K562 (cell line): ENCODE measurements at regions of chr12 and their contacts with region 1.

Region 1: DNA sequence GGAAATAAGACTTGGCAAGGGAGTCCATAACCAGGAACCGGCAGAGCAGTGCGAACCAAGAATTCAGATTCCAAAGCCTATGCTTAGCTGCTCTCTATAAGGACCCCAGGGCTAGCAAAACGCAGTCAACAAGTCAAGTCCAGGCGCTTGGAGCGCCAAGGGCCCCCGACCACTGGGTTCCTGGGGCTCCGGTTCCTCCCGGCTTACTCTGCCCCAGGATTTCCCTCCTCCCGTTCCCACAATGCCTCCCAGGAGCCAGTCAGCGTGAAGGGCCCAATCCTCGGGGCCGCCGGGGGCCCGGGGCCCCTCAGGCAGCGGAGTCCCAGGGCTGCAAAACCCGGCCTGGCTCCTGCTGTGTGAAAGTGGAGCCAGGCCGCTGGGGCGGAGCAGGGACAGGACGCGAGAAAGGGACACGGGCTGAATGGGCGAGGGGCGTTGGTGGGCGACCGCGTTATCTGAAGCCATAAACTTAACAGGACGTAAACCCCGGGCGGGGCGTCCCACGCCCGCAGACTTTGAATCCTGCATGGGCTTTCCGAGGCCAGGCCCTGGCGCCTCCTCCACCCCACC is 1.5 kb downstream of the KRT8 start:
- DNase-seq: peak; percentile 88 to 95 (median 91)
- ATAC-seq: peak; percentile 89
- H3K4me3 ChIP-seq: peak overlapping the region; percentile 58
- H3K27ac ChIP-seq: peak overlapping the region; percentile 83
- H3K4me1 ChIP-seq: peaks cover 43 to 53% of the 10 kb centered on the region in 2 experiments
- H3K27me3 ChIP-seq: no peaks in the 10 kb centered on the region
- CTCF ChIP-seq: no peak
- EP300 ChIP-seq: peak; percentile 30; the same call in 1 of the 2 replicates
- POLR2A ChIP-seq: no peak
- RAD21 ChIP-seq: 0 out of 4 replicates have a peak, but pooled peaks of 1 of the 2 experiments have one; percentile 16

Region 2: DNA sequence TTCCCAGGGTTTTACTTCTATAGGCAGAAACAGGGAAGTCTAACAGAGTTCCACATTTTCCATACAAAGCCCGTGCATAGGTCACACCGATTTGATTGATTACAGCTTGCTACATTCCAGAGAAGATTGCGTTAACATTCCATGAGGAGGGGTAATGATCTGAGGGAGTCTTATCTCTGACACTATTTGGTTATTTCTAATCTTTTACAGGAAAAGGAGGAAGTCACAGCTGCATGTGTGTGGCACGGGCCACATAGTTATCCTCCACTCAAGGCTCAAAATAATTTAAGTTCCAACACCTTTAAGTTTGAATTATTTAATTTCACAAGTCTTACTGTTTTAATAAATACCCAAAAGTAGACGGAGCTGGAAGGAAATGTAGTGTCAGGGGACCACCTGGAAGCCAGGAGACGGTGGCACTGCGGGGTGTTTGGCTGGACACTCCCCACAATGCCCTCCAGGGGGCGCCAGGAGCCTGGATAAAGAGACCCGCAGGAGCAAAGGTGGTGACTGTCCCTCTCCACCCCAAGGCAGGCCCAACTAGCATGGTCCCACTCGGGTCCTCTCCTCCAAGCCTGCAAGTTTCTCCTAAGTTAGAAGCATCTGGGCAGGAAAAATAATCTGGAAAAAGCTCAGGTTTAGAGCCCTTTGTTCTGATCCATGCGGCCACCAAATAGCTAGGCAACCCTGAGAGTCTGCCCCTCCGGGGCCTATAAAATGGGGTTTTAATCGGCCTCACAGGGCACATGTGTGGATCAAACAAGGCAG is 18.7 kb before region 1 on chr12:
- CTCF ChIA-PET with region 1: interaction called, 7 read pairs
- POLR2A ChIA-PET with region 1: interaction called, 6 read pairs
- in situ Hi-C with region 1: no loop called
- intact Hi-C with region 1: loop called (anchors 1 kb)
- DNase-seq: peak; percentile 83 to 90 (median 88)
- ATAC-seq: peak; percentile 94
- H3K4me3 ChIP-seq: no peak overlapping the region
- H3K27ac ChIP-seq: no peak overlapping the region
- H3K4me1 ChIP-seq: peaks cover 0 to 6% of the 10 kb centered on the region in 2 experiments; a peak in 3 of 5 replicates
- H3K27me3 ChIP-seq: no peaks in the 10 kb centered on the region
- CTCF ChIP-seq: peak; percentile 95 to 97 (median 97)
- EP300 ChIP-seq: no peak
- POLR2A ChIP-seq: no peak
- RAD21 ChIP-seq: peak; percentile 99 to 100

Region 3: DNA sequence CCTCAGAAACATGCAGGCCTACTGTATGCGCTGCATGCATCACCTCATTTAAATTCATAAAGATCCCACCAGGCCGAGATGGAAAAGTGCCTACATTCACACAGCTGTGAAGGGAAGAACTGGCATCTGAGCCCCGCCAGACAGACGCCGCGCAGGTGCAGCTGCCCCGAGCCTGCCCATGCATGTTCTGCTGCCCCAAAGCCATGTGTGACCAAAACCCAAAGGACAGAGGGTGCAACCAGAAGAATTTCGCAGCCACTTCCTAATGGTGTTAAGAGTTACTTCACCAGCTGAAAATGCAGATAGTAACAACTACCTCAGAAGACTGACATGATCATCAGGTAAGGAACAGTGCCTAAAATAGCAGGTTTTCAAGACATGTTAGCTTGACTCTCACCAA is 15.0 kb after region 1 on chr12:
- CTCF ChIA-PET with region 1: no interaction called
- POLR2A ChIA-PET with region 1: interaction called, 18 read pairs
- in situ Hi-C with region 1: no loop called
- intact Hi-C with region 1: no loop called
- DNase-seq: peak in 1 of 4 experiments; percentile 3
- ATAC-seq: no peak
- H3K4me3 ChIP-seq: no peak overlapping the region
- H3K27ac ChIP-seq: no peak overlapping the region
- H3K4me1 ChIP-seq: peaks cover 7 to 15% of the 10 kb centered on the region in 2 experiments
- H3K27me3 ChIP-seq: no peaks in the 10 kb centered on the region
- CTCF ChIP-seq: no peak
- EP300 ChIP-seq: no peak
- POLR2A ChIP-seq: no peak
- RAD21 ChIP-seq: no peak

Region 4: GRCh38 chr12:52924764-52925716 is 21.7 kb after region 1 on chr12:
- CTCF ChIA-PET with region 1: no interaction called
- POLR2A ChIA-PET with region 1: interaction called, 13 read pairs
- in situ Hi-C with region 1: no loop called
- intact Hi-C with region 1: loop called (anchors 1 kb)
- DNase-seq: peak; percentile 80 to 92 (median 86)
- ATAC-seq: peak; percentile 83
- H3K4me3 ChIP-seq: peak overlapping the region; percentile 10; the same call in 1 of the 2 replicates
- H3K27ac ChIP-seq: peak overlapping the region; percentile 80
- H3K4me1 ChIP-seq: peaks cover 31 to 48% of the 10 kb centered on the region in 2 experiments
- H3K27me3 ChIP-seq: no peaks in the 10 kb centered on the region
- CTCF ChIP-seq: no peak
- EP300 ChIP-seq: peak; percentile 84
- POLR2A ChIP-seq: no peak
- RAD21 ChIP-seq: 0 out of 4 replicates have a peak, but pooled peaks of 1 of the 2 experiments have one; percentile 3

Region 5: DNA sequence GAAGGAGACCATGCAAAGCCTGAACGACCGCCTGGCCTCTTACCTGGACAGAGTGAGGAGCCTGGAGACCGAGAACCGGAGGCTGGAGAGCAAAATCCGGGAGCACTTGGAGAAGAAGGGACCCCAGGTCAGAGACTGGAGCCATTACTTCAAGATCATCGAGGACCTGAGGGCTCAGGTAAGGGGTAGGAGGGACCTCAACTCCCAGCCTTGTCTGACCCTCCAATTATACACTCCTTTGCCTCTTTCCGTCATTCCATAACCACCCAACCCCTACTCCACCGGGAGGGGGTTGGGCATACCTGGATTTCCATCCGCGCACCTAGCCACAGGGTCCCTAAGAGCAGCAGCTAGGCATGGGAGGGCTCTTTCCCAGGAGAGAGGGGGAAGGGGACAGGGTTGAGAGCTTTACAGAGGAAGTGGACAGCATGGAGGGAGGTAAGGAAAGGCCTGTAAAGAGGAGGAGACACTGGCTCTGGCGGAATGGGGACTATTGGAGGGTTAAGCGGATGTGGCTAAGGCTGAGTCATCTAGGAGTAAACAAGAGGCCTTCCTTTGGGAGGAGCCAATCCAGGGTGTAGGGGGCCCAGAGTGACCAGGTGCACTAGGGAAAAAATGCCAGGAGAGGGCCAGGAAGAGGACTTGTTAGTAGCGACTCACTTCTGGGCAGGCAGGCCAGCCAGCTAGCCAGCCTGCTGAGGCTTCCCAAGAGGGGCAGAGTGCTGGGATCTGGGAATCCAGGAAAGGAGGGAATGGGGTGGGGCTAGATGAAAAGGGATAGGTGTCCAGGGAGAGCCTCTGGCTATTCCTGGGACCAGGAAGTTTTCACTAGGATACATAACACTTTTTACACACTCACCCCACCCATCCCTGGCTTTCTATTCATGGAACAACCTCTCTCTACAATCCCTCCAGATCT is 46.3 kb after region 1 on chr12:
- CTCF ChIA-PET with region 1: interaction called, 4 read pairs
- POLR2A ChIA-PET with region 1: interaction called, 35 read pairs
- in situ Hi-C with region 1: loop called (anchors 5 kb)
- intact Hi-C with region 1: loop called (anchors 1 kb)
- DNase-seq: peak; percentile 82 to 93 (median 86)
- ATAC-seq: peak; percentile 87
- H3K4me3 ChIP-seq: peak overlapping the region; percentile 99
- H3K27ac ChIP-seq: peak overlapping the region; percentile 100
- H3K4me1 ChIP-seq: peaks cover 47 to 58% of the 10 kb centered on the region in 2 experiments
- H3K27me3 ChIP-seq: no peaks in the 10 kb centered on the region
- CTCF ChIP-seq: no peak; a peak in 1 of 6 replicates
- EP300 ChIP-seq: peak; percentile 81
- POLR2A ChIP-seq: peak; percentile 96
- RAD21 ChIP-seq: no peak; a peak in 2 of 4 replicates

Region 6: DNA sequence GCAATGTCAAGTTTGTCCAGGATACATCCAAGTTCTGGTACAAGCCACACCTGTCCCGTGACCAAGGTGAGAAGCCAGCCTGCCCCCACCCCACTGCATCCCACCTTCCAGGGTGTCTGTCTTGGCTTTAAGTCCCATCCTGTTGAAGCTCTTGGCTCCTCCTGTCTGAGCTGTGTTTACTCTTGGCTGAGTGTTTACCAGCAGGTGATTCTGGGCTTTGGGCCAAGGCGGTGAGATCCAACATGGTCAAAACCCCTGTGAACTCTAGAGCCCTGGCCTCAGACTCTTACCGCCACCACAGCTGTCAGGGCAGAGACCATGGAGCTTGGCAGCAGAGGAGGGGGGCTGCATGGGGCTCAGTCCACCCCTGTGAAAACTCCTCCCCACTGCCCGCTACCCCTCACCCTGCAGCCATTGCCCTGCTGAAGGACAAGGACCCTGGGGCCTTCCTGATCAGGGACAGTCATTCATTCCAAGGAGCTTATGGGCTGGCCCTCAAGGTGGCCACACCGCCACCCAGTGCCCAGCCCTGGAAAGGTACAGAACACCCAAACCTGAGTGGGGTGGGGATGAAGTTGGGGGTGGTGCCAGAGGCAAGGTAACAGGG is 158.1 kb after region 1 on chr12:
- CTCF ChIA-PET with region 1: no interaction called
- POLR2A ChIA-PET with region 1: no interaction called
- in situ Hi-C with region 1: no loop called
- intact Hi-C with region 1: no loop called
- DNase-seq: peak in 3 of 4 experiments; percentile 51 to 64 (median 64)
- ATAC-seq: peak; percentile 81
- H3K4me3 ChIP-seq: no peak overlapping the region
- H3K27ac ChIP-seq: no peak overlapping the region
- H3K4me1 ChIP-seq: peaks cover 16 to 55% of the 10 kb centered on the region in 2 experiments; a peak in 4 of 5 replicates
- H3K27me3 ChIP-seq: no peaks in the 10 kb centered on the region; a peak in 1 of 5 replicates
- CTCF ChIP-seq: peak; percentile 54 to 69 (median 55)
- EP300 ChIP-seq: no peak
- POLR2A ChIP-seq: no peak
- RAD21 ChIP-seq: peak in 1 of 2 experiments; percentile 50; a peak in 2 of 4 replicates